ENCODE measurements at regions of chrX and their contacts with region 1.

Region 1: GRCh38 chrX:154317391-154317995 is 21.9 kb downstream of the TKTL1 start:
- DNase-seq: peak; percentile 20
- ATAC-seq: peak in 1 of 2 donors; percentile 57

Region 2: DNA sequence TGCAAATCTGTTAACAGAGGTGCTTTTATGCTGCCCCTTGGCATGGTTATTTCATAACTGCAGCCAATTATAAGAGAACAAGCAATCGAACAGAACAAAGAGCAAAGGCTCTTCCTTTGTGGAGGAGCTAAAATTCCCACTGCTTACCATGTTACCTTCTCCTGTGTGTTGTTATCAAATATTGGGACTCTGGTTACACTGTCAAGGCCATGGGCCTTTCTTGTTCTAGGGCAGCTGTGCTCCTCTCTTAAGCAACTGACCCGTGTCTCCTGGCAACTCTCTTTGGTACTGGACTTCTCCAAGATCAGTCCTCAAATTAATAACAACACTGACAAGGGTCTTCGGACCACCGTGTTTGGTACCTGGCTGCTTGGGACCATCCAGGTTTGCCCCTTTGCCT is 185.5 kb before region 1 on chrX:
- intact Hi-C with region 1: loop called in 1 of 2 experiments (anchors 5 kb)
- DNase-seq: no peak
- ATAC-seq: no peak